ENCODE measurements at regions of chr5 and their contacts with region 1.

Region 1: DNA sequence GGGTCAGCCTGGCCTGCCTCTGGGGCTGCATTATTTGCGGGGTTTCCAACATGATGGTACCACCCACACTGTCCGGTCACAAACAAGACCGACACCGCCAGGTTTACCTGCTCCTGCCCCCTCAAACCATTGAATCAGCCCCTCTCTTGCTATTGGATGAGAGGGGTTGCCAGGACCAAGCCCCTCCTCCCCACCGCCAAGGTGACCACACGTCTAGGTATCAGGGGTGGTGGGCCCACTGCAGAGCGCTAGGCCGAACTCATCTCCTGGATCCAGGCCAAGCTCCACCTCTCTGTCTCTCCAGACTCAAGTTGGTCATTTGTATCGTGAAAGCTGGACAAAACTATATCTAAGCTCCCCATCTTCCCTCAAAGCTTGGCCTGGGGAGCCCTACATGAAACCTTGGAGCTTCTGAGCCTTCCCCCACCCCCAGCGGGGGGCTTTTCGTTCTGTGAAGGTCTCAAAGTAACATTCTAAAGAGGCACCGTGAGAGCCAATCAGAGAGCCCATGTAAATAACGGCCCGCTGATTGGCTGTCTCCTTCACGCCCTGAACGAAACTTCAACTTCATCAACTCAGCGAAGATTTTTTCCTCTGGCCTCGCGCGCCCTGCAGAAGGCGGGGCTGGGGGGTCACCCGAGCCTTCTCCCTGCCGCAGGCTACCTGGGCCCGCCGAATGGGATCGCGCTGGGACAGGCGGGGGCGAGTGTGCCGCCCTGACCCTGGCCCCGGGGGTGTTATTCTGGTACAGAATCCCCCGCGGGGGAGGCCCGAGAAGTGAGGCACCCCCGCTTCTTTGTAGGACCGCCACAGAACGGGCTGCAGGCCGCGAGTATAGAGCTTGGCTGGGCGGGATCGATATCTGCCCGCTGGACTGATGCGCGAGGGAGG is 49.6 kb upstream of the PSD2 start:
- DNase-seq: peak; percentile 31 to 64 (median 41)
- ATAC-seq: peak; percentile 68
- H3K4me3 ChIP-seq: peak overlapping the region; percentile 79
- H3K4me3 Mint-ChIP-seq: peak overlapping the region; percentile 88 to 100 (median 91)
- H3K27ac ChIP-seq: no peak overlapping the region
- H3K27ac Mint-ChIP-seq: peak overlapping the region in 4 of 9 donors; percentile 13 to 82 (median 52)
- H3K4me1 ChIP-seq: peaks cover 7 to 8% of the 10 kb centered on the region in 2 donors
- H3K4me1 Mint-ChIP-seq: peaks cover 18 to 25% (median 23%) of the 10 kb centered on the region in 7 donors
- H3K27me3 ChIP-seq: no peaks in the 10 kb centered on the region
- H3K27me3 Mint-ChIP-seq: peaks cover 7 to 67% (median 15%) of the 10 kb centered on the region in 5 donors

Region 2: GRCh38 chr5:139651853-139652787 is 93.9 kb before region 1 on chr5:
- CTCF ChIA-PET with region 1: no interaction called
- POLR2A ChIA-PET with region 1: no interaction called
- intact Hi-C with region 1: loop called in 1 of 2 experiments (anchors 2 kb)
- DNase-seq: peak in 3 of 9 donors; percentile 39 to 63 (median 54)
- ATAC-seq: peak; percentile 66
- H3K4me3 ChIP-seq: no peak overlapping the region
- H3K4me3 Mint-ChIP-seq: peak overlapping the region in 6 of 10 donors; percentile 5 to 94 (median 20)
- H3K27ac ChIP-seq: no peak overlapping the region
- H3K27ac Mint-ChIP-seq: peak overlapping the region in 1 of 9 donors; percentile 3
- H3K4me1 ChIP-seq: peaks cover 19 to 33% of the 10 kb centered on the region in 2 donors
- H3K4me1 Mint-ChIP-seq: peaks cover 12 to 44% (median 35%) of the 10 kb centered on the region in 7 donors
- H3K27me3 ChIP-seq: peaks cover 3 to 30% of the 10 kb centered on the region in 2 donors
- H3K27me3 Mint-ChIP-seq: peaks cover 36 to 58% (median 45%) of the 10 kb centered on the region in 5 donors

Region 3: GRCh38 chr5:139668064-139668880 is 77.8 kb before region 1 on chr5:
- CTCF ChIA-PET with region 1: no interaction called
- POLR2A ChIA-PET with region 1: no interaction called
- intact Hi-C with region 1: loop called in 1 of 2 experiments (anchors 5 kb)
- DNase-seq: peak in 4 of 9 donors; percentile 21 to 48 (median 25)
- ATAC-seq: peak; percentile 14
- H3K4me3 ChIP-seq: peak overlapping the region; percentile 46
- H3K4me3 Mint-ChIP-seq: peak overlapping the region; percentile 60 to 86 (median 78)
- H3K27ac ChIP-seq: peak overlapping the region; percentile 46
- H3K27ac Mint-ChIP-seq: peak overlapping the region in 2 of 9 donors; percentile 31 to 89
- H3K4me1 ChIP-seq: peaks cover 36% of the 10 kb centered on the region in 2 donors
- H3K4me1 Mint-ChIP-seq: peaks cover 7 to 51% (median 34%) of the 10 kb centered on the region in 7 donors
- H3K27me3 ChIP-seq: peaks cover 0 to 3% of the 10 kb centered on the region in 2 donors
- H3K27me3 Mint-ChIP-seq: peaks cover 0 to 4% (median 3%) of the 10 kb centered on the region in 5 donors

Measured in naive thymus-derived CD4-positive, alpha-beta T cell (primary cell).